Astrocyte of the cerebellum (primary cell): ENCODE measurements at regions of chr3 and their contacts with region 1.

Region 1: GRCh38 chr3:136050250-136050649 is 84.7 kb downstream of the PPP2R3A start:
- DNase-seq: peak; percentile 11
- H3K4me3 ChIP-seq: no peak overlapping the region
- CTCF ChIP-seq: no peak

Region 2: GRCh38 chr3:135911110-135911509 is 139.1 kb before region 1 on chr3:
- in situ Hi-C with region 1: loop called (anchors 5 kb)
- DNase-seq: no peak
- H3K4me3 ChIP-seq: no peak overlapping the region
- CTCF ChIP-seq: no peak

Region 3: DNA sequence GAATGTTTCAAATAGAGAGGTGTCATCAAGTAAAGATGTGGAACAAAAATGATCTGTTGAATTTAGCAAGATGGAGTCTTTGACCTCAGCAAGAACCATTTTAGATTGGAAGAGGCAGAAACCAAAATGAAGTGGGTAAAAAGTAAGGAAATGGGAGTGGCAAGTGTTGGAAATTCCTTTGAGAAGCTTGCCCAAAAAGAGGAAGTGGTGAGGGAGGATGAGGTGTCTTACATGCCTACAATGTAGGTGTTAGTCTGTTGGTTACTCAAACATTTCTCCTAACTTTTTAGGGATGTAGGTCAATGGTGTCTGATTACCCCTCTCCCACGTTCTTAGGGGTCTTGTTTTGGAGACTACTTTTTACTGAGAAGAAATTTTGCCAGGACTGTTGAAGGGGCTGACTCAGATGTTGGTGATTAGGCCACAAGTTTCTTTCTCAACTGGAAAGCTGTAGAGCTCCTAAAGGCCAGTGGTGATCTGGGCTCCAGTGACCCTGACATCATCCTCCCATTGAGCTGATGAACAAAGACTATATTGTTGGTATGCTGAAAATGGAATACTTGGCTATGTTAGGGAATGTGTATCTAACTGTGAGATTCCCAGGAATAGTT is 79.6 kb before region 1 on chr3:
- in situ Hi-C with region 1: loop called (anchors 5 kb)
- DNase-seq: no peak
- H3K4me3 ChIP-seq: no peak overlapping the region
- CTCF ChIP-seq: no peak

Region 4: GRCh38 chr3:136122006-136122405 is 71.8 kb after region 1 on chr3:
- in situ Hi-C with region 1: no loop called
- DNase-seq: no peak
- H3K4me3 ChIP-seq: no peak overlapping the region
- CTCF ChIP-seq: no peak